ENCODE measurements at regions of chr3 and their contacts with region 1.

Region 1: GRCh38 chr3:196432137-196432879 is at the start of gene UBXN7:
- DNase-seq: peak; percentile 97
- ATAC-seq: peak; percentile 84
- H3K4me3 ChIP-seq: peak within 1 kb of the TSS; percentile 77 to 100 (median 93)
- H3K4me3 Mint-ChIP-seq: peak within 1 kb of the TSS; percentile 75
- H3K27ac ChIP-seq: peak within 1 kb of the TSS; percentile 88 to 90
- H3K27ac Mint-ChIP-seq: peak within 1 kb of the TSS; percentile 69
- H3K4me1 ChIP-seq: peaks cover 7 to 19% of the 10 kb centered on the region in 2 donors
- H3K4me1 Mint-ChIP-seq: peaks cover 20% of the 10 kb centered on the region
- H3K27me3 ChIP-seq: no peaks in the 10 kb centered on the region
- H3K27me3 Mint-ChIP-seq: no peaks in the 10 kb centered on the region
- CTCF ChIP-seq: no peak
- total RNA-seq, gene UBXN7: 107 and 114 TPM in 2 replicates

Region 2: GRCh38 chr3:196081791-196082618 is 350.3 kb before region 1 on chr3 and contains the start of gene TFRC:
- CTCF ChIA-PET with region 1: no interaction called
- POLR2A ChIA-PET with region 1: no interaction called
- intact Hi-C with region 1: loop called (anchors 5 kb)
- DNase-seq: peak; percentile 97
- ATAC-seq: peak; percentile 93
- H3K4me3 ChIP-seq: peak within 1 kb of the TSS; percentile 79 to 99 (median 86)
- H3K4me3 Mint-ChIP-seq: peak within 1 kb of the TSS; percentile 93
- H3K27ac ChIP-seq: peak within 1 kb of the TSS; percentile 84 to 97
- H3K27ac Mint-ChIP-seq: peak within 1 kb of the TSS; percentile 96
- H3K4me1 ChIP-seq: peaks cover 25 to 42% of the 10 kb centered on the region in 2 donors
- H3K4me1 Mint-ChIP-seq: peaks cover 44% of the 10 kb centered on the region
- H3K27me3 ChIP-seq: no peaks in the 10 kb centered on the region
- H3K27me3 Mint-ChIP-seq: no peaks in the 10 kb centered on the region
- CTCF ChIP-seq: no peak
- total RNA-seq, gene TFRC: 104 and 117 TPM in 2 replicates

Region 3: DNA sequence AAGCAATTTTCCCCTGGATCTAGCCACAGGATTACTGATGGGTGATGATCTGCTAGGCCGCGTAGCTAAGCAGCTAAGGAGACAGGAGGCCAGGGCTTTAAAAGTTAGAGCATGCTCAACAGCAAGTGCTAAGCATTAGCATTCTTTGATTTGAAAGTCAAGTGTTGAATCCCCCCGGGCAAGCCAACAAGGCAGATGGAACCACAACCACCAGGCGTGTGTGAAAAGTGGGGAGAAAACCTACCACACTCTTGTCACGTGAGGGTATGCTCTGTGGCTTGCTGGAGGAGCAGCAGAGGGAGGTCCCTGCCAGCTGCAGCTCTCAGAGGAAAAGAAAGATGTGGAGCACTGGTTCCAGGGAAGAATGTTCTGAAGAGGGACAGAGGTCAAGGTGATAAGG is 195.1 kb before region 1 on chr3:
- CTCF ChIA-PET with region 1: no interaction called
- POLR2A ChIA-PET with region 1: no interaction called
- intact Hi-C with region 1: no loop called
- DNase-seq: no peak
- ATAC-seq: no peak
- H3K4me3 ChIP-seq: no peak overlapping the region
- H3K4me3 Mint-ChIP-seq: no peak overlapping the region
- H3K27ac ChIP-seq: no peak overlapping the region
- H3K27ac Mint-ChIP-seq: no peak overlapping the region
- H3K4me1 ChIP-seq: peaks cover 0 to 4% of the 10 kb centered on the region in 2 donors
- H3K4me1 Mint-ChIP-seq: peaks cover 9% of the 10 kb centered on the region
- H3K27me3 ChIP-seq: no peaks in the 10 kb centered on the region
- H3K27me3 Mint-ChIP-seq: no peaks in the 10 kb centered on the region
- CTCF ChIP-seq: no peak

Region 4: DNA sequence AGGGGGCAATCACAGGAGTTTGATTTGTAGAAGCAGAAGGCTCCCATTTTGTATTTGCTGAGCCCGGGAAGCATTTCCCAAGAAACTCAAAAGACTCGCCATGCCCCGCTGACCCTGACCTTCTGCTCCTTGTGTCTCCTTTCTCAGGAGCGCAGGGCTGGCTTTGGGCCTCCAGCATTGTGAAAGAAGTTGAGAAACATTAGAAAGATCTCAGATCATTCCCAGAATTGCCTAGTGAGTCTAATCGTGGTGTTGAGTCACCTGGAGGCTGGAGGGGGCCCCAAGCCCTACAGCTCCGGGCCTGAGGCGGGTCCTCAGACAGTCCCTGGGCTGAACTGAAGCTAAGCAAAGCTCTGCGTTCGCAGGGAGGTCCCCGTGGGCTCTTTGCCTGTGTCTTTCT is 547.2 kb after region 1 on chr3:
- CTCF ChIA-PET with region 1: no interaction called
- POLR2A ChIA-PET with region 1: no interaction called
- intact Hi-C with region 1: no loop called
- DNase-seq: no peak
- ATAC-seq: no peak
- H3K4me3 ChIP-seq: no peak overlapping the region
- H3K4me3 Mint-ChIP-seq: no peak overlapping the region
- H3K27ac ChIP-seq: no peak overlapping the region
- H3K27ac Mint-ChIP-seq: no peak overlapping the region
- H3K4me1 ChIP-seq: peaks cover 0 to 6% of the 10 kb centered on the region in 2 donors
- H3K4me1 Mint-ChIP-seq: no peaks in the 10 kb centered on the region
- H3K27me3 ChIP-seq: peaks cover 0 to 4% (median 0%) of the 10 kb centered on the region in 4 experiments
- H3K27me3 Mint-ChIP-seq: peaks cover 38% of the 10 kb centered on the region
- CTCF ChIP-seq: no peak

Measured in B cell (primary cell).